CD4-positive, alpha-beta memory T cell (primary cell): ENCODE measurements at regions of chr1 and their contacts with region 1.

Region 1: DNA sequence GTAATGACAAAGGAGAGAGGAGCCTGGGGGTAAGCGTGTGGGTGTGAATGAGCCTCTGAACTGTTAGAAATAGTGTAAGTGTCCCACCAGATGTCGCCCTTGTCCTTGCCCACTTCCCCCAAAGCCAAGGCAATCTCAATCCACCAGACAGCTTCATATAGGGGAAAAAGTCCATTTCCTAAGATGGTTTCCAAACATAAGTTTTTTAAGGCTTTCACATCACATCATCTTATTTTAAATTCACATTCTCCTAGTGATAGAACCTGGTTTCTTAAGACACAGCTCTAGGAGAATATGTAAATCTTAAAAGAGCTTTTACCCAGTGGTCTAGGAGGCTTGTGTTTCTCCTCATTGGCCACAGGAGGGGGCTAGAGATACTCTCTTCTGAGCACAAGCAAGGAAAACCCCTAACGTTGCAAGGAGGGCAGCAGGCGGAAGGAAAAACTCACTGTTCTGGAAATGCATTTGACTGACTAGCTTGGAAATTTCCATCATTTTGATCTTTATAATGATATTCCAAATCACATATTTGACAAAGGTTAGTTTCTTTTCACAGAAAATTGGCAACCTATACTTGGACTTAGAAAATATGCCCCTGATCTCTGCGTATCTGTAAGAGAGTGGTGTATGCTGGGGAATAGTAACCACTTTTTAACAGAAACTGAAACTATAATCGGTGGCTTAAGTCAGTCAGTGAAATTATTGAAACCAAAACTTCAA is 51.9 kb upstream of the LPAR3 start:
- DNase-seq: peak; percentile 89 to 94 (median 91)
- H3K4me3 ChIP-seq: peak overlapping the region; percentile 55 to 82
- H3K4me3 Mint-ChIP-seq: peak overlapping the region; percentile 85 to 97 (median 90)
- H3K27ac ChIP-seq: peak overlapping the region; percentile 81
- H3K27ac Mint-ChIP-seq: peak overlapping the region; percentile 92 to 100 (median 97)
- H3K4me1 ChIP-seq: peaks cover 5% of the 10 kb centered on the region
- H3K4me1 Mint-ChIP-seq: peaks cover 5 to 15% (median 11%) of the 10 kb centered on the region in 4 donors
- H3K27me3 ChIP-seq: no peaks in the 10 kb centered on the region
- H3K27me3 Mint-ChIP-seq: no peaks in the 10 kb centered on the region

Region 2: GRCh38 chr1:84442256-84442655 is 502.7 kb before region 1 on chr1:
- CTCF ChIA-PET with region 1: interaction called, 3 read pairs
- POLR2A ChIA-PET with region 1: no interaction called
- intact Hi-C with region 1: loop called (anchors 2 kb)
- DNase-seq: peak; percentile 47 to 78 (median 72)
- H3K4me3 ChIP-seq: no peak overlapping the region
- H3K4me3 Mint-ChIP-seq: peak overlapping the region in 6 of 8 donors; percentile 37 to 68 (median 48)
- H3K27ac ChIP-seq: no peak overlapping the region
- H3K27ac Mint-ChIP-seq: peak overlapping the region in 6 of 7 donors; percentile 10 to 87 (median 62)
- H3K4me1 ChIP-seq: peaks cover 15% of the 10 kb centered on the region
- H3K4me1 Mint-ChIP-seq: peaks cover 12 to 22% (median 17%) of the 10 kb centered on the region in 4 donors
- H3K27me3 ChIP-seq: no peaks in the 10 kb centered on the region
- H3K27me3 Mint-ChIP-seq: peaks cover 4 to 9% of the 10 kb centered on the region in 2 donors

Region 3: GRCh38 chr1:84996846-84997666 is 52.1 kb after region 1 on chr1 and contains the start of gene MCOLN2:
- CTCF ChIA-PET with region 1: interaction called, 14 read pairs
- POLR2A ChIA-PET with region 1: interaction called, 9 read pairs
- intact Hi-C with region 1: loop called (anchors 1 kb)
- DNase-seq: peak; percentile 42 to 58 (median 52)
- H3K4me3 ChIP-seq: peak within 1 kb of the TSS; percentile 82 to 86
- H3K4me3 Mint-ChIP-seq: peak within 1 kb of the TSS; percentile 81 to 98 (median 89)
- H3K27ac ChIP-seq: peak within 1 kb of the TSS; percentile 50
- H3K27ac Mint-ChIP-seq: peak within 1 kb of the TSS; percentile 51 to 88 (median 76)
- H3K4me1 ChIP-seq: peaks cover 56% of the 10 kb centered on the region
- H3K4me1 Mint-ChIP-seq: peaks cover 30 to 67% (median 39%) of the 10 kb centered on the region in 4 donors
- H3K27me3 ChIP-seq: peaks cover 4% of the 10 kb centered on the region
- H3K27me3 Mint-ChIP-seq: peaks cover 3 to 17% of the 10 kb centered on the region in 2 donors
- total RNA-seq, gene MCOLN2: 16.8 to 20.3 TPM

Region 4: DNA sequence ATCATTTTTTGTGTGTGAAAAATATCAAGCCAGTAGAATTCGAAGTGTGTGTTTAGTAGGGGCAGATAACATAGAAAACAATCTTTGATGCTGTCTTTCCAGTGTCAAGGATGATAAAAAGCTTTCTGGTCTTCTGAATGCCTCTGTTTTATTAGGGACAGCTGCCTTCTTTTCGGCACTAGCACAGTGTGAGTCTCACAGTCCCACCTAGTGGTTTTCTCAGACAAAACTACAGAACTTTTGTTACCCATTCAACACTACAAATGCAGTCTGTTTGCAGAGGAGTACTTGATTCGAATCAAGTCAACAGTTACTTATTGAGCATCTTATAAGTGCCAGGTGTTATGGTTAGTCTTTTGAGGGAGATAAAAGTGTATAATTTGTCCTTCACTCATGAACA is 134.0 kb after region 1 on chr1:
- CTCF ChIA-PET with region 1: interaction called, 5 read pairs
- POLR2A ChIA-PET with region 1: no interaction called
- intact Hi-C with region 1: loop called (anchors 1 kb)
- DNase-seq: no peak
- H3K4me3 ChIP-seq: no peak overlapping the region
- H3K4me3 Mint-ChIP-seq: no peak overlapping the region
- H3K27ac ChIP-seq: no peak overlapping the region
- H3K27ac Mint-ChIP-seq: no peak overlapping the region
- H3K4me1 ChIP-seq: no peaks in the 10 kb centered on the region
- H3K4me1 Mint-ChIP-seq: peaks cover 4 to 5% (median 5%) of the 10 kb centered on the region in 4 donors
- H3K27me3 ChIP-seq: no peaks in the 10 kb centered on the region
- H3K27me3 Mint-ChIP-seq: peaks cover 4 to 8% of the 10 kb centered on the region in 2 donors

Region 5: GRCh38 chr1:85240174-85240601 is 295.3 kb after region 1 on chr1:
- CTCF ChIA-PET with region 1: interaction called, 16 read pairs
- POLR2A ChIA-PET with region 1: interaction called, 5 read pairs
- intact Hi-C with region 1: no loop called
- DNase-seq: peak in 3 of 5 donors; percentile 11 to 17 (median 12)
- H3K4me3 ChIP-seq: no peak overlapping the region
- H3K4me3 Mint-ChIP-seq: peak overlapping the region in 1 of 8 donors; percentile 9
- H3K27ac ChIP-seq: no peak overlapping the region
- H3K27ac Mint-ChIP-seq: peak overlapping the region in 3 of 7 donors; percentile 37 to 78 (median 50)
- H3K4me1 ChIP-seq: peaks cover 8% of the 10 kb centered on the region
- H3K4me1 Mint-ChIP-seq: peaks cover 6 to 12% (median 10%) of the 10 kb centered on the region in 4 donors
- H3K27me3 ChIP-seq: no peaks in the 10 kb centered on the region
- H3K27me3 Mint-ChIP-seq: peaks cover 2 to 4% of the 10 kb centered on the region in 2 donors

Region 6: DNA sequence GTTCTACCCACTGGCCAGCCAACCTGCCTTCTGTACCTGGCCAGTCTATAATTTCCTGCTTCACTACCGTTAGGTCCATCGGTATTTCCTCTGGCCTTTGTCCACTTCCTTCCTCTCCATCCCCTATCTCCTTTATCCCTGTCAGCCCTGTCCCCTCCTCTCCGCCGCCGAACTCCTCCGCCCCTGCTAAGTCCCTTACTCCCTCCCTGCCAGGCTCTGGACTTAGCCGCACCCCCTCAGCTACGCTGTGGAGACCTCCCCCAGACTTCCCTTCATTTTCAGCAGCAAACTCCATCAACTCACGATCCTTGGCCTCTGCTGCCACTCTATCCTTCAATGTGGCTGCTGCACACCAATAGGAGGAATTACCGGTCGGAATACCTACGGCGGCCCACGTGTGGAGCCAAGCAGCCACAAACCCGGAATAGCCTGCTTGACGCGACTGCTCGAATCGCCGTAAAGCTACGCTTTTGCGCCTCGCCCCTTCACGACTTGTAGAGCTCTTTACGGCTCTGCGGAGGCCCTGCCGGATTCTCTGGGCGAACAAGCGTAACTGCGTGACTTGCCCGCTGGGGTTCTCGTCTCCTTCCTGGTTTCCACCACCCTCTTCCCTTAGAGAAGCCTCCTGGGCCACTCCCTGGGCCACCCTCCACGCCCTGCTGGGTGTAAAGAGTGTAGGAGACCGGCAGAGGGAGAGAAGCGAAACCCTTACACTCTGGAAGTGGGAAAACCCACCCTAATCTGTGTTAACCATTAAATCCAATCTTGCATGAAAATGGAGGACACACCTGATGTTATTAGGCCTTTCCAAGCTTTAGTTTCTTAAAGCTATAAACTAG is 763.3 kb after region 1 on chr1 and contains the start of gene ZNHIT6:
- CTCF ChIA-PET with region 1: no interaction called
- POLR2A ChIA-PET with region 1: no interaction called
- intact Hi-C with region 1: loop called (anchors 10 kb)
- DNase-seq: peak; percentile 87 to 95 (median 91)
- H3K4me3 ChIP-seq: peak within 1 kb of the TSS; percentile 70 to 93
- H3K4me3 Mint-ChIP-seq: no peak within 1 kb of the TSS
- H3K27ac ChIP-seq: peak within 1 kb of the TSS; percentile 73
- H3K27ac Mint-ChIP-seq: no peak within 1 kb of the TSS
- H3K4me1 ChIP-seq: peaks cover 43% of the 10 kb centered on the region
- H3K4me1 Mint-ChIP-seq: peaks cover 19 to 29% (median 25%) of the 10 kb centered on the region in 4 donors
- H3K27me3 ChIP-seq: no peaks in the 10 kb centered on the region
- H3K27me3 Mint-ChIP-seq: no peaks in the 10 kb centered on the region
- total RNA-seq, gene ZNHIT6: 18.0 to 19.2 TPM